PC-9 (cell line): ENCODE measurements at regions of chr4 and their contacts with region 1.

Region 1: DNA sequence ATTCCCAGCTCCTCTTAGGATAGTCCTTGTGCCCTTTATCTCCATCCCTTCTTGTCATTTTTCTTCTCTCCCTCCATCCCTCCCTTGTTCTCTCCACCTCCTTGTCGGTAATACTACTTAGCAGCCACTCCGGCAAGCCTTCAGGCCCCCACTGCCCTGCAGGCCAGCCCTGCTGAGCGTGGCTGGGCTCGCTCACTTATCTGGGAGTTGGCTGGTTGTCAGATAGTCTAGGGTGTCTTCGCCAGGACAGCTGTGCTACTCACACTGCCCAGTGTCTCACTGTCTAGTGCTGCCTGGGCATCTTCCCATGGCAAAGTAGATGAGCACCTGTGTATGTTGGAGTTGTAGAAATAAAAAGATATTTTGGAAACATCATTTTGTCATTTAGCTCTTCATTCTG is 75.0 kb downstream of the STK32B start:
- DNase-seq: no peak
- H3K4me3 ChIP-seq: no peak overlapping the region
- H3K27ac ChIP-seq: no peak overlapping the region
- H3K4me1 ChIP-seq: no peaks in the 10 kb centered on the region
- H3K27me3 ChIP-seq: peaks cover 33% of the 10 kb centered on the region; the same call in 1 of the 2 replicates
- CTCF ChIP-seq: no peak

Region 2: DNA sequence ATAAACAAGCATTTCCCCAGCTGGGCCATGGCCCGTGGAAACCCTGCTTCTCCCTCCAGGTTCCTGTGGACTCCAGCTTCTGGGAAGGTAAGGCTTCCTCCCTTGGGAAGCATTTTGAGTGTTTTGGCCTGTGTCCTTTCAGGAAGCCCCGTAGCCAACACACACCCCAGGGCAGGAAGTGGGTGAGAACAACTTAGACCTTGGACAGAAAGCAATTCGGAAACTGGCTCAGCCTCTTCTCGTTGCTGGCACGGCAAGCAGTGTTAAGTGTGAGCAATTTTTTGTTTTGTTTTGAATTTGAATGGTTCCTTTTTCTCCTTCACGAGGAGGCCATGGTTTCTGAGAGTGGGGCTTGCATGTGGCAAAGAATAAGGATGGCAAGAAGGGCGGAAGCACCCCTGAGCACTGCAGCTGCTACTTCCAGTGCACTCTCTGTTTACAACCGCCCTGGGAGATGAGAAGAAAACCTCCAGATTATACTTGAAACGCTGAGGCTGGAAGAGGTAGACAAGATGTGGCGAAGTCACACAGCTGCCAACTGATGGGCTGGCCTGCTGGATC is 92.9 kb before region 1 on chr4:
- CTCF ChIA-PET with region 1: interaction called, 12 read pairs
- POLR2A ChIA-PET with region 1: no interaction called
- intact Hi-C with region 1: no loop called
- DNase-seq: no peak
- H3K4me3 ChIP-seq: no peak overlapping the region
- H3K27ac ChIP-seq: no peak overlapping the region
- H3K4me1 ChIP-seq: peaks cover 9% of the 10 kb centered on the region; the same call in 1 of the 2 replicates
- H3K27me3 ChIP-seq: peaks cover 19% of the 10 kb centered on the region
- CTCF ChIP-seq: no peak

Region 3: DNA sequence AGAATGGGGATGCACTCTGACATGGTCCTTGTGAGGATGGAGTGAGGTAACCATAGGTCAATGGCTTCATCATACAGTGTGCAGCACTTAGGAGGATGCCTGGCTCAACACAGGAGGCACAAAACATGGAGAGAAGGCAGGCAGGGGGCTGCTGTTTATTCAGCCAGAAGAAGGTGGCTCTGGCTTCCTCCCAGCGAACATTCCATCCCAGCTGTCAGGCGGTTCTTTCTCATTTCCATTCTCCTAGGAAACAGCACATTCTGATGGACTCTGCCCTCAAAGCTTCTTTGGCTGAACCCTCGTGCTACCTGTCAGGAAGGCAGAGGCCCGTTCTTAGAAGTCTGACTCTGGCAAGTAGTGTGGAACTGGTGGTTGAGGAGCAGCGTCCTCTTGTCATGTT is 56.3 kb before region 1 on chr4:
- CTCF ChIA-PET with region 1: no interaction called
- POLR2A ChIA-PET with region 1: no interaction called
- intact Hi-C with region 1: no loop called
- DNase-seq: no peak
- H3K4me3 ChIP-seq: no peak overlapping the region
- H3K27ac ChIP-seq: no peak overlapping the region
- H3K4me1 ChIP-seq: no peaks in the 10 kb centered on the region
- H3K27me3 ChIP-seq: peaks cover 10% of the 10 kb centered on the region; the same call in 1 of the 2 replicates
- CTCF ChIP-seq: no peak

Region 4: GRCh38 chr4:5165420-5166369 is 39.5 kb after region 1 on chr4:
- CTCF ChIA-PET with region 1: no interaction called
- POLR2A ChIA-PET with region 1: no interaction called
- intact Hi-C with region 1: no loop called
- DNase-seq: no peak
- H3K4me3 ChIP-seq: no peak overlapping the region
- H3K27ac ChIP-seq: no peak overlapping the region
- H3K4me1 ChIP-seq: no peaks in the 10 kb centered on the region
- H3K27me3 ChIP-seq: peaks cover 70% of the 10 kb centered on the region
- CTCF ChIP-seq: no peak